Heart right ventricle (tissue), 16 donors: ENCODE measurements at regions of chr16 and their contacts with region 1.

Region 1: DNA sequence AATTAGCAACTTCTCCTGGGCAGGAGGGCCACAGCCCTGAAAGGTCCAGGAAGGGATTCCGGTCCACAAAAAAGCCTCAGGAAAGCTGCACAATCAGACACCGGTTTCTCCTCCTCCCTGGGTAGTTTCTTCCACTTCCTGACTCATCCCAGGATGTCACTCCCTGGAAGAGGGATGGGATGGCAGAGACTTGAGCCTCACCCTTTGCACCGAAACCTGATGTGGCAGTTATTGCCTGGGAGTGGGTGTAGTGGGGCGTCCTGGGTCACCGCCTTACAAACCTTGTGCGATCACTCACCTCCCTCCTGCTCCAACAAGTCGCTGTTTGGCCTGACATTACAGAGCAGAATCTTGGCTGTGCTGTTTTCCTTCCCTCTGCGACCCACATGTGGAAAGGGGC is 70.8 kb downstream of the LYRM1 start:
- DNase-seq: no peak
- ATAC-seq: no peak
- H3K4me3 ChIP-seq: no peak overlapping the region
- H3K27ac ChIP-seq: no peak overlapping the region
- H3K4me1 ChIP-seq: no peaks in the 10 kb centered on the region
- H3K27me3 ChIP-seq: no peaks in the 10 kb centered on the region
- CTCF ChIP-seq: no peak

Region 2: GRCh38 chr16:20910781-20911321 is 60.5 kb before region 1 on chr16:
- intact Hi-C with region 1: loop called in 1 of 10 experiments (anchors 10 kb)
- DNase-seq: no peak
- ATAC-seq: peak; percentile 37 to 83 (median 68)
- H3K4me3 ChIP-seq: no peak overlapping the region
- H3K27ac ChIP-seq: peak overlapping the region; percentile 20 to 88 (median 67)
- H3K4me1 ChIP-seq: peaks cover 12 to 92% (median 36%) of the 10 kb centered on the region in 9 donors
- H3K27me3 ChIP-seq: no peaks in the 10 kb centered on the region
- CTCF ChIP-seq: no peak

Region 3: GRCh38 chr16:21326459-21326858 is 355.1 kb after region 1 on chr16:
- intact Hi-C with region 1: no loop called
- DNase-seq: no peak
- ATAC-seq: no peak
- H3K4me3 ChIP-seq: no peak overlapping the region
- H3K27ac ChIP-seq: no peak overlapping the region
- H3K4me1 ChIP-seq: no peaks in the 10 kb centered on the region
- H3K27me3 ChIP-seq: no peaks in the 10 kb centered on the region
- CTCF ChIP-seq: no peak